Posterior vena cava (tissue), 2 donors: ENCODE measurements at regions of chr17 and their contacts with region 1.

Region 1: GRCh38 chr17:54771409-54771808 is 129.2 kb upstream of the TOM1L1 start:
- DNase-seq: no peak

Region 2: GRCh38 chr17:55090079-55090492 is 318.7 kb after region 1 on chr17:
- intact Hi-C with region 1: loop called in 1 of 2 experiments (anchors 5 kb)
- DNase-seq: no peak